ENCODE measurements at regions of chr17 and their contacts with region 1.

Region 1: DNA sequence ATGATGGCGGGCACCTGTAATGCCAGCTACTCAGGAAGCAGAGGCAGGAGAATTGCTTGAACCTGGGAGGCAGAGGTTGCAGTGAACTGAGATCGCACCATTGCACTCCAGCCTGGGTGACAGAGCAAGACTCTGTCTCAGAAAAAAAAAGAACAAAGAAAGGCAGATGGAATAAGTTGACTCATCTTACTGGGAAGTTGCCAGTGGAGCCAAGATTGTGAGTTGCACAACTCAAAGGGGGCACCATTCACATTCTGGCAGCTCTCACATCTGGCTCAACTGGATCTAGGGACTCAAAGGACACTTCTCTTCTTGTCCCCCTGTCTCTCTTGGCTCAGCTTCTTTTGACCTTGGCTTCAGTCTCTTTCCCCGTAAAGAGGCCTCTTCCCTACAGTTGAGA is 53.7 kb upstream of the ETV4 start:
- DNase-seq: no peak
- ATAC-seq: peak in 1 of 8 donors; percentile 36
- H3K4me3 ChIP-seq: no peak overlapping the region
- H3K27ac ChIP-seq: peak overlapping the region in 2 of 10 donors; percentile 15 to 70
- H3K4me1 ChIP-seq: peaks cover 0 to 32% (median 18%) of the 10 kb centered on the region in 9 donors
- H3K27me3 ChIP-seq: no peaks in the 10 kb centered on the region
- CTCF ChIP-seq: no peak

Region 2: DNA sequence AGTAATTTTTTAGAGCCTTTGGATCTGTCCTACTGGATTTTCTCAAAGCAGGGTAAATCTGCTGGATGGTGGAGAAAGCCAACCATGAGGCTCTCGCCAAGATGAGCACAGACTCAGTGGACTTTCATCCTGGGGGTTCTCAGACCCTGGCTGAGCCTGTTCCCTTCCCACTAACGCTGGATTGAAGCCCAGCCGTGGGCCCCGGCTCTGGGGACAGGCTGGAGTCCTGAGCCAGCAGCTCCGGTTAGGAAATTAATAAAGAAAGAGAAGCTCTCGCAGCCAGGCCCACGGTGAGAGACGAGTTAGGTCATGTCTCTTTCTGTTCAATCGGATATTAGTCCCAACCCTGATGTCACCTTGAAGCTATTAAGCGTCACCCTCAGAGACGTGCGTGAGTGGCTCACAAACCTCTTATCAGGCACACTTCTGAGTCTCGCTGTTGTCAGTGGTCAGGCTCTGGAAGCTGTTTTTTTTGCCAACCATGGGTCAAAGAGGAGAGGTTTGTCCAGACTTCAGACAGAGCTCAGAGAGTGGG is 34.8 kb after region 1 on chr17:
- intact Hi-C with region 1: loop called in 1 of 10 experiments (anchors 5 kb)
- DNase-seq: peak; percentile 48 to 56
- ATAC-seq: peak; percentile 49 to 88 (median 72)
- H3K4me3 ChIP-seq: no peak overlapping the region
- H3K27ac ChIP-seq: peak overlapping the region in 9 of 10 donors; percentile 43 to 97 (median 67)
- H3K4me1 ChIP-seq: peaks cover 3 to 27% (median 13%) of the 10 kb centered on the region in 9 donors
- H3K27me3 ChIP-seq: no peaks in the 10 kb centered on the region
- CTCF ChIP-seq: no peak

Region 3: DNA sequence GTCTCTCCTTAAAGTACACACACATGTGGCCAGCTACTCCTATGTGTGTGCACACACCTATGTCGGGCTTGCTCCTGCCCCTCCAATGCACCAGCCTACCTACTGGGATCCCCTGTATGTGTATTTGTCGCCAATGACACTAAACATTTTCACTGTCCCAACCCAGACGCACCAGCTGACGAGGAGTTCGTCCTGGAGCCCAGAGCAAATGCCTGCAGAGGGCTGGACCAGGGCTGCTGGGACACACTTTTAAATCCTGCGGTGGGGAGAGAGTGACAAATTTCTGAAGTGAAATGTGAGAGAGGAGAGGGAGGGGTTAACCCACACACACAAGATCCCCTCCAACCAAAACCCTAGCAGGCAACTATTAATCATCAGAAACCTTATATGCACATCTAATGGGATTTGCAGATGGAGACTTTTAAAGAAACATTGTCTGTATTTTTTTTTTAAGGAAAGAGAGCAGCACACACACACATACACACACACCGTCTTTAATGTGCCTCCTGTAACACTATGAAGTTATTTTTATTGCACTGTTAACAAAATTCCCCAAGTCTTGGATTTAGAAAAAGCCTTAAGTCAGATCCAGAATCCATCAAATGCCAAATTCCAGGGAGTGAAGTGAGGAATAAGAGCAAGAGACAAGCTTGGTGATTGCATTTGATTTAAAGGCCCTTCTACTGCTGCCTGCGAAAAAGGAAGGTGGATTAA is 62.0 kb after region 1 on chr17 and contains the start of gene MEOX1:
- intact Hi-C with region 1: no loop called
- DNase-seq: peak in 1 of 2 donors; percentile 56
- ATAC-seq: peak in 7 of 8 donors; percentile 40 to 71 (median 48)
- H3K4me3 ChIP-seq: peak within 1 kb of the TSS; percentile 14 to 76 (median 52)
- H3K27ac ChIP-seq: peak within 1 kb of the TSS; percentile 30 to 98 (median 85)
- H3K4me1 ChIP-seq: peaks cover 16 to 89% (median 50%) of the 10 kb centered on the region in 9 donors
- H3K27me3 ChIP-seq: no peaks in the 10 kb centered on the region
- CTCF ChIP-seq: no peak
- total RNA-seq, gene MEOX1: 6.4 to 20.7 (median 12.3) TPM

Measured in heart right ventricle (tissue), 16 donors.